Activated T-helper 1 cell treated with anti-CD3 and anti-CD28 coated beads, Interleukin-12 subunit alpha, Interleukin-12 subunit beta, Interleukin-2, Interleukin-4 antibody, amounts not matched to agents 30 ng/mL and 10 ng/mL and 1 ng/mL, durations not matched to agents 14 hours and 24 hours and 36 hours (primary cell): ENCODE measurements at regions of chr19 and their contacts with region 1.

Region 1: DNA sequence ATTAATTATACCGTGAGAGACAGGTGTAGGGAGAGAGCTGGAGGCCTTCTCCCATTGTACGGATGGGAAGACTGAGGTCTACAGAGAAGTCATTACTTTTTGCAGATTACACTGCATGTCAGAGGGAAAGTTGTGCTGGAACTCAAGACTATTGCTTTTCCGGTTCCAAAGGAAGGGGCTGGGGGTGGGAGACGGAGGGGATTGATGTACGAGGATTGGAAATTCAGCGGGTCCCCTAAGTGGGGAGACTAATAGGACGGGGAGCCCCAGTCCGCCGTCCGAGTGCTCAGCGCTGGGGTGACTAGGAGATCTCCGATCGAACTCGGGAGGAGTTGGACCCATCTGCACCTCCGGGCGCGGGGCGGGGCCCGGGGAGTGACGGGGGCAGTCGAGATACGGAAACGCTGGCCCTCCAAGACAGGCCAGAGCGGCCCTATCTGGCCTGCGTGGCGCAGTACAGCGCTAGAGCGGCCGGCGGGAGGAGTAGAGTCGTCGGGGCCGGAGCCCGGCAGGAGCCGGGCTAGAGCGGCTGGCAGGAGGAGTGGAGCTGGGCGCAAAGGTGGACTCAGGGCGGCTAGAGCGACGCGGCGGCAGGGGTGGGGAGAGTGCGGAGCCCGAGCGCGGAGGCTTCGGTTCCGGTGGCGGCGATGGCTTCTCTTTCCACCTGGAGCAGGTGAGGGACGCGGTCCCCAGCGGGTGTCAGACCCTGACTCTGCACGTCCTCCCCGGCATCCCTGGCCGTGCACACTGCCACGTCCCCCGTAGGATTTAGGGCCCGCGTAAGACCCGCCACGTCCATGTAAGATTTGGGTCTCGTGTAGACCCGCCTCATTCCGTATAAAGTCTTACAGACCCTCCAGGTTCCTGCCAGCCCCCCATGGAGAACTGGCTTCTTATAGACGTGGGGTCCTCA is 1.1 kb downstream of the ARHGEF1 start:
- DNase-seq: peak; percentile 89
- H3K4me3 Mint-ChIP-seq: peak overlapping the region; percentile 81
- H3K27ac Mint-ChIP-seq: peak overlapping the region; percentile 96
- H3K4me1 Mint-ChIP-seq: peaks cover 56% of the 10 kb centered on the region
- H3K27me3 Mint-ChIP-seq: no peaks in the 10 kb centered on the region

Region 2: GRCh38 chr19:41541990-41542584 is 342.0 kb before region 1 on chr19:
- intact Hi-C with region 1: loop called (anchors 10 kb)
- DNase-seq: peak; percentile 66
- H3K4me3 Mint-ChIP-seq: peak overlapping the region; percentile 68
- H3K27ac Mint-ChIP-seq: peak overlapping the region; percentile 73
- H3K4me1 Mint-ChIP-seq: peaks cover 82% of the 10 kb centered on the region
- H3K27me3 Mint-ChIP-seq: no peaks in the 10 kb centered on the region

Region 3: DNA sequence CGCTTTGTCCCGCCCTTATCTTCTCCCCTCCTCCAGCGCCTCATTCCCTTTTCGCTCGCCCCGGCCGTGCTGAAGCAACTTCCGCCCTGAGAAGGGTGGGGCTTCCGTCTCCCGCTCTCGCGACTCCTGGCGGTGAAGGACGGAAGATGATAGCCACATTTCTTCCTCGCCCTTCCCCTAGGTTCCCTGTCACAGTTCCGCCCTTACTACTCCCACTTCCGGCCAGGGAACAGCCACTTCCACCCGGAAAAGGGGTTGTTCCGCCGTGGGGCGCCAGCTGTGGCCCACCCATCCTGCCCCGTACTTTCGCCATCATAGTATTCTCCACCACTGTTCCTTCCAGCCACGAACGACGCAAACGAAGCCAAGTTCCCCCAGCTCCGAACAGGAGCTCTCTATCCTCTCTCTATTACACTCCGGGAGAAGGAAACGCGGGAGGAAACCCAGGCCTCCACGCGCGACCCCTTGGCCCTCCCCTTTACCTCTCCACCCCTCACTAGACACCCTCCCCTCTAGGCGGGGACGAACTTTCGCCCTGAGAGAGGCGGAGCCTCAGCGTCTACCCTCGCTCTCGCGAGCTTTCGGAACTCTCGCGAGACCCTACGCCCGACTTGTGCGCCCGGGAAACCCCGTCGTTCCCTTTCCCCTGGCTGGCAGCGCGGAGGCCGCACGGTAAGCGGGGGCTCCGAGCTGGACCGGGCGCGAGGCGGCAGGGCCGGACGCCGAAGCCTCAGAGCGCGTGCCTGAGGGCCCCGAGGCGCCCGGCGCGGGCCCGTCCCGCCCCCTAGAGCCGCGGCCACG is 24.3 kb before region 1 on chr19 and contains the start of gene RPS19:
- intact Hi-C with region 1: loop called (anchors 1 kb)
- DNase-seq: peak; percentile 97
- H3K4me3 Mint-ChIP-seq: peak within 1 kb of the TSS; percentile 95
- H3K27ac Mint-ChIP-seq: peak within 1 kb of the TSS; percentile 97
- H3K4me1 Mint-ChIP-seq: peaks cover 39% of the 10 kb centered on the region
- H3K27me3 Mint-ChIP-seq: peaks cover 9% of the 10 kb centered on the region
- total RNA-seq, gene RPS19: 2,887 and 2,906 TPM in 2 replicates

Region 4: GRCh38 chr19:41928221-41928683 is 44.2 kb after region 1 on chr19 and contains the start of gene ERFL:
- intact Hi-C with region 1: loop called (anchors 1 kb)
- DNase-seq: no peak
- H3K4me3 Mint-ChIP-seq: peak within 1 kb of the TSS; percentile 88
- H3K27ac Mint-ChIP-seq: peak within 1 kb of the TSS; percentile 88
- H3K4me1 Mint-ChIP-seq: peaks cover 24% of the 10 kb centered on the region
- H3K27me3 Mint-ChIP-seq: peaks cover 4% of the 10 kb centered on the region
- total RNA-seq, gene ERFL: 3.1 TPM in 2 replicates

Region 5: GRCh38 chr19:41959056-41960053 is 75.3 kb after region 1 on chr19 and contains the start of gene RABAC1:
- intact Hi-C with region 1: loop called (anchors 1 kb)
- DNase-seq: peak; percentile 87
- H3K4me3 Mint-ChIP-seq: peak within 1 kb of the TSS; percentile 88
- H3K27ac Mint-ChIP-seq: peak within 1 kb of the TSS; percentile 90
- H3K4me1 Mint-ChIP-seq: peaks cover 17% of the 10 kb centered on the region
- H3K27me3 Mint-ChIP-seq: peaks cover 2% of the 10 kb centered on the region
- total RNA-seq, gene RABAC1: 36.2 and 41.3 TPM in 2 replicates

Region 6: GRCh38 chr19:42121656-42122069 is 237.6 kb after region 1 on chr19:
- intact Hi-C with region 1: loop called (anchors 5 kb)
- DNase-seq: peak; percentile 74
- H3K4me3 Mint-ChIP-seq: peak overlapping the region; percentile 78
- H3K27ac Mint-ChIP-seq: peak overlapping the region; percentile 97
- H3K4me1 Mint-ChIP-seq: peaks cover 42% of the 10 kb centered on the region
- H3K27me3 Mint-ChIP-seq: no peaks in the 10 kb centered on the region